CD4-positive, alpha-beta memory T cell (primary cell): ENCODE measurements at regions of chr1 and their contacts with region 1.

Region 1: DNA sequence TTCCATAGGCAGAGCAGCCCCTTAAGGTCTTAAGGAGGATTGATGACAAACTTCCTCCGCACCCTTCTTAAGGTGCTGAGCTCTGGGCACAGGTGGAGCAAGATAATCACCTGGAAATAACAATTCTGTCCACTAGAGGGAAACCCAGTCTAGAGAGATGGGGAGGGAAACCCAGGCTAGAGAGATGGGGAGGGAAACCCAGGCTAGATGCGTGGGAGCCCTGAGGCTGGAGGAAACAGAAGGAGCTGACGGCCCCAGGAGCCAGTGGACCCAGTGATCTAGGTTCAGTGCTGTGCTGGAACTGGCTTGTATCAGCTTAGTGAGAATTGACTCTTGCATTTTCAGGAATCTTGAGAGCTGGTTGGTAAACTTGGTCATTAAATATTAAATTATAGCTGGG is 17.8 kb upstream of the MYCL start:
- DNase-seq: peak; percentile 48 to 70 (median 67)
- H3K4me3 ChIP-seq: no peak overlapping the region
- H3K4me3 Mint-ChIP-seq: no peak overlapping the region
- H3K27ac ChIP-seq: no peak overlapping the region
- H3K27ac Mint-ChIP-seq: no peak overlapping the region
- H3K4me1 ChIP-seq: no peaks in the 10 kb centered on the region
- H3K4me1 Mint-ChIP-seq: no peaks in the 10 kb centered on the region
- H3K27me3 ChIP-seq: no peaks in the 10 kb centered on the region
- H3K27me3 Mint-ChIP-seq: peaks cover 3 to 5% of the 10 kb centered on the region in 2 donors

Region 2: DNA sequence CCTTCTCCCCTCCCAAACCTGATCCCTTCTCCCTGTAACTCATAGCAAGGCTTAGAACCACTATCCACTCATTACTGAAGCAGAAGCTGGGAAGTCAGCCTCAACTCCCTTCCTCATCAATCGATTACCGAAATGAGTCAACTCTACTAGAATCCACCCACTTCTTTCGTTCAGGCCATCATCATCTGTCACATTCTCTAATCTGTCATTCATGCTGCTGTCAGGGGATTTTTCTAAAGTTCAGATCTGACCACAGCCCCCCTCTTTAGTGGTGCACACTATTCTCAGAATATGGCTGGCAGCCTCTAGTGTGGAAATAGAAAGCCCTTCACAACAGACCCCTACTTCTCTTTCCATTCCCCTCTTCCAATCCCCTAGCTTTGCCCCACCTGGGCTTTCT is 252.8 kb before region 1 on chr1:
- CTCF ChIA-PET with region 1: no interaction called
- POLR2A ChIA-PET with region 1: no interaction called
- intact Hi-C with region 1: no loop called
- DNase-seq: no peak
- H3K4me3 ChIP-seq: no peak overlapping the region
- H3K4me3 Mint-ChIP-seq: no peak overlapping the region
- H3K27ac ChIP-seq: no peak overlapping the region
- H3K27ac Mint-ChIP-seq: no peak overlapping the region
- H3K4me1 ChIP-seq: peaks cover 10% of the 10 kb centered on the region
- H3K4me1 Mint-ChIP-seq: peaks cover 0 to 7% (median 4%) of the 10 kb centered on the region in 4 donors
- H3K27me3 ChIP-seq: peaks cover 12% of the 10 kb centered on the region
- H3K27me3 Mint-ChIP-seq: peaks cover 14 to 17% of the 10 kb centered on the region in 2 donors

Region 3: GRCh38 chr1:39907528-39908453 is 11.8 kb before region 1 on chr1:
- CTCF ChIA-PET with region 1: interaction called, 11 read pairs
- POLR2A ChIA-PET with region 1: no interaction called
- intact Hi-C with region 1: no loop called
- DNase-seq: no peak
- H3K4me3 ChIP-seq: no peak overlapping the region
- H3K4me3 Mint-ChIP-seq: peak overlapping the region in 1 of 8 donors; percentile 14
- H3K27ac ChIP-seq: no peak overlapping the region
- H3K27ac Mint-ChIP-seq: no peak overlapping the region
- H3K4me1 ChIP-seq: no peaks in the 10 kb centered on the region
- H3K4me1 Mint-ChIP-seq: no peaks in the 10 kb centered on the region
- H3K27me3 ChIP-seq: no peaks in the 10 kb centered on the region
- H3K27me3 Mint-ChIP-seq: peaks cover 22 to 37% of the 10 kb centered on the region in 2 donors

Region 4: DNA sequence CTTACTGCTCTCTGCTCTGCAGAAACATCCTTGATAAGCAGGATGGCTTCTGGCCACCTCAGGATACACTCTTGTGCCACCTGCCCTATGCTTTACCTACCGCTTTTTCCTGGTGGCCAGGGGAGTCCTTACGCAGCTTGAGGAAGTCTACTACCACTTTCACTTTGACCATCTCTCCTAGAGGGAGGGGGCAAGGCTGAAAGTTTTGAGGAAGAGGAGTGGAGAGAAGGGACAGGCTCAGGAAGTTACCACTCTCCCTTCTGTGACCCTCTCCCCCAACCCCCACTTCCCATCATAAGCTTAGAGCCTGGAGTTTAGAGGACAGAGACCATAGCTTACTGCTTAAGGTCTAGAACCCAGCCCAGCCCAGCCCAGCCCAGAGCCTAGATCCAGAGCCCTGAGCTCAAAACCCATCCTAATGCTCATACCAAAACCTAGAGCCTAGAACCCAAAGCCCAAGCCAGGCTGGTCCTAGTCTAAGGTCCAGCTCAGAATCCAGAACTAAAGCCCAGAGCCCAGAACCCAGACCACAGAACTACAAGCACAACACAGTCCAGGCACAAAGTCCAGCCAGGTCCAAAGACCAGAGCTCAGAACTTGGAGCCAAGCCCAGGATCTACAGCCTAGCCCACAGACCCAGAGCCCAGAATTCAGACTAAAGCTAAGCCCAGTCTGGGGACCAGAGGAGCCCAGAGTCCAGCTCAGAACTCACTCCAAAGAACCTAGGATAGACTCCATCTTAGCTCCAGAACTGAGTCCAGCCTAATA is 17.4 kb after region 1 on chr1:
- CTCF ChIA-PET with region 1: interaction called, 14 read pairs
- POLR2A ChIA-PET with region 1: no interaction called
- intact Hi-C with region 1: no loop called
- DNase-seq: no peak
- H3K4me3 ChIP-seq: no peak overlapping the region
- H3K4me3 Mint-ChIP-seq: no peak overlapping the region
- H3K27ac ChIP-seq: no peak overlapping the region
- H3K27ac Mint-ChIP-seq: no peak overlapping the region
- H3K4me1 ChIP-seq: no peaks in the 10 kb centered on the region
- H3K4me1 Mint-ChIP-seq: no peaks in the 10 kb centered on the region
- H3K27me3 ChIP-seq: no peaks in the 10 kb centered on the region
- H3K27me3 Mint-ChIP-seq: peaks cover 0 to 1% of the 10 kb centered on the region in 2 donors

Region 5: DNA sequence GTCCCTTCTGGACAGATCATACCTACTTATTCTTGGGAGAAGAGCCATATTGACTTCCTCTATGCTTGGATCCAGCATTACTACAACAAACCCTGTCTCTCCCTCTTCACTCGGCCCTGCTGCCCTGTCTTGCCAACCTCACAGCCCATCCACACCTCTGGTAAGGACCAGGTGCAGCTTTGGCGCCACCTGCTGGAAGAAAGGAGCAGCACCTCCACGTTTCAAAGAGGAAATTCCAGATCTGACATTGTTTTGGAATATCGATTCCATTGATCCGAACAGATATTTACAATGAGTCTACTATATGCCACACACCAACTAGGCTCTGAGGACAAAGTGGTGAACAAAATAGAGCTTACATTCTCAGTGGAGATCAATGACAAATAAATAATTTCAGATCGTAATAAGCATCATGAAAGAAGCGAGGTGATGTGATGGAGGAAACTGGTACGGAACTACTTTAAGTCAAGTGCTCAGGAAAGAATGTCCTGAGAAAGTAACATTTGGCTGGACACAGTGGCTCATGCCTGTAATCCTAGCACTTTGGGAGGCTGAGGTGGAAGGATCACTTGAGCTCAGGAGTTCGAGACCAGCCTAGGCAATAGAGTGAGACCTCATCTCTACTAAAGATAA is 54.1 kb after region 1 on chr1:
- CTCF ChIA-PET with region 1: interaction called, 168 read pairs
- POLR2A ChIA-PET with region 1: no interaction called
- intact Hi-C with region 1: loop called (anchors 1 kb)
- DNase-seq: peak; percentile 65 to 68 (median 66)
- H3K4me3 ChIP-seq: no peak overlapping the region
- H3K4me3 Mint-ChIP-seq: peak overlapping the region in 1 of 8 donors; percentile 43
- H3K27ac ChIP-seq: no peak overlapping the region
- H3K27ac Mint-ChIP-seq: peak overlapping the region in 1 of 7 donors; percentile 43
- H3K4me1 ChIP-seq: no peaks in the 10 kb centered on the region
- H3K4me1 Mint-ChIP-seq: peaks cover 5 to 7% (median 6%) of the 10 kb centered on the region in 4 donors
- H3K27me3 ChIP-seq: no peaks in the 10 kb centered on the region
- H3K27me3 Mint-ChIP-seq: no peaks in the 10 kb centered on the region